Left ventricle myocardium inferior (tissue), 1 donor: ENCODE measurements at regions of chr15 and their contacts with region 1.

Region 1: GRCh38 chr15:85831415-85832113 is 36.8 kb upstream of the KLHL25 start:
- DNase-seq: peak; percentile 58
- H3K4me3 ChIP-seq: no peak overlapping the region
- H3K27ac ChIP-seq: no peak overlapping the region
- H3K4me1 ChIP-seq: no peaks in the 10 kb centered on the region
- H3K27me3 ChIP-seq: no peaks in the 10 kb centered on the region
- CTCF ChIP-seq: peak; percentile 75

Region 2: GRCh38 chr15:85618956-85619491 is 212.5 kb before region 1 on chr15:
- intact Hi-C with region 1: no loop called
- DNase-seq: peak; percentile 74
- H3K4me3 ChIP-seq: peak overlapping the region; percentile 65
- H3K27ac ChIP-seq: peak overlapping the region; percentile 83
- H3K4me1 ChIP-seq: peaks cover 100% of the 10 kb centered on the region
- H3K27me3 ChIP-seq: no peaks in the 10 kb centered on the region
- CTCF ChIP-seq: no peak

Region 3: DNA sequence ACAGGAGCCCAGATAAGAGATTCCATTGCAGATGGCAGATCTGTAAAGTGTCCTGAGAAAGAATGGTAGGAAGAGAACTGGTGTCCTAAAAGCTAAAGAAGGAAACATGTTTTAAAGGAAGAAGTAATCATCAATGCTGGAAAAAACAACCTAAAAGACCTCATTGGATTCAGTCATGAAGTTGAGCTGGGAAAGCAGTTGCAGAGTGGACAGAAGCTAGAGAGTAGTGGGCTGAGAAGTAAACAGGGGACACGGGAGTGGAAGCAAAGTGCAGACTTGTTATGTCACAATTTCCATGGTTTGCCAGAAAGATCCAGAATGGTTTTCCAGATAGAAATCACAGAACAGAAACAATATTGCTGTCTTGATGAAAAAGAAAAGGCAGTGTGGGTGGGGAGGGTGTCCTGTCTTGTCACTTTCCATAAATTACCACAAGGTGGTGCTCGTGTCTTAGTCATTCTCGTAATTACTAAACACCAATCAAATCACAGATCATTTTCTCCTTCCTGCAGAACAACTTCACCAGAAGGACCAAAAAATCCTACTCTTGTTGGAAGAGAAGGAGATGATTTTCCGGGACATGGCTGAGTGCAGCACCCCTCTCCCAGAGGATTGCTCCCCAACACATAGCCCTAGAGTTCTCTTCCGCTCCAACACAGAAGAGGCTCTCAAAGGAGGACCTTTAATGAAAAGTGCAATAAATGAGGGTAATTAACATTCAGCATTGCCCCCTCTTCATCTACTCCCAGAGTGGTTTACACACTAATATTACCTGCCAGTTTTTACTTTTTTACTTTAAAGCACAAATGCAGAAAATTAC is 101.4 kb before region 1 on chr15:
- intact Hi-C with region 1: loop called (anchors 10 kb)
- DNase-seq: no peak
- H3K4me3 ChIP-seq: no peak overlapping the region
- H3K27ac ChIP-seq: peak overlapping the region; percentile 88
- H3K4me1 ChIP-seq: peaks cover 42% of the 10 kb centered on the region
- H3K27me3 ChIP-seq: no peaks in the 10 kb centered on the region
- CTCF ChIP-seq: peak; percentile 84

Region 4: GRCh38 chr15:86201313-86202008 is 369.9 kb after region 1 on chr15:
- intact Hi-C with region 1: no loop called
- DNase-seq: no peak
- H3K4me3 ChIP-seq: no peak overlapping the region
- H3K27ac ChIP-seq: no peak overlapping the region
- H3K4me1 ChIP-seq: no peaks in the 10 kb centered on the region
- H3K27me3 ChIP-seq: peaks cover under 1% of the 10 kb centered on the region
- CTCF ChIP-seq: no peak